Spleen (tissue), 13 donors: ENCODE measurements at regions of chr9 and their contacts with region 1.

Region 1: GRCh38 chr9:33167046-33167808 is at the start of gene B4GALT1:
- DNase-seq: peak; percentile 100
- H3K4me3 ChIP-seq: peak within 1 kb of the TSS; percentile 78 to 90 (median 84)
- H3K27ac ChIP-seq: peak within 1 kb of the TSS; percentile 94 to 99 (median 98)
- H3K4me1 ChIP-seq: peaks cover 40 to 77% (median 60%) of the 10 kb centered on the region in 6 donors
- H3K27me3 ChIP-seq: no peaks in the 10 kb centered on the region
- CTCF ChIP-seq: peak in 6 of 11 experiments; percentile 12 to 43 (median 24)
- POLR2A ChIP-seq: peak; percentile 57 to 86 (median 57)
- total RNA-seq, gene B4GALT1: 75.1 to 111 (median 91.4) TPM

Region 2: GRCh38 chr9:33076358-33077004 is 90.7 kb before region 1 on chr9 and contains the start of gene SMU1:
- intact Hi-C with region 1: loop called (anchors 5 kb)
- DNase-seq: peak; percentile 99
- H3K4me3 ChIP-seq: peak within 1 kb of the TSS; percentile 42 to 76 (median 68)
- H3K27ac ChIP-seq: peak within 1 kb of the TSS; percentile 64 to 97 (median 93)
- H3K4me1 ChIP-seq: peaks cover 19 to 72% (median 51%) of the 10 kb centered on the region in 6 donors
- H3K27me3 ChIP-seq: no peaks in the 10 kb centered on the region
- CTCF ChIP-seq: peak in 2 of 11 experiments; percentile 16 to 39
- POLR2A ChIP-seq: peak in 2 of 3 donors; percentile 50 to 91
- total RNA-seq, gene SMU1: 15.7 to 23.3 (median 19.4) TPM

Region 3: GRCh38 chr9:33111631-33112030 is 55.6 kb before region 1 on chr9:
- intact Hi-C with region 1: no loop called
- DNase-seq: no peak
- H3K4me3 ChIP-seq: no peak overlapping the region
- H3K27ac ChIP-seq: peak overlapping the region in 1 of 8 donors; percentile 22
- H3K4me1 ChIP-seq: peaks cover 0 to 35% (median 16%) of the 10 kb centered on the region in 6 donors
- H3K27me3 ChIP-seq: no peaks in the 10 kb centered on the region
- CTCF ChIP-seq: no peak
- POLR2A ChIP-seq: no peak

Region 4: GRCh38 chr9:33124751-33125381 is 42.4 kb before region 1 on chr9:
- intact Hi-C with region 1: loop called (anchors 5 kb)
- DNase-seq: peak; percentile 74
- H3K4me3 ChIP-seq: no peak overlapping the region
- H3K27ac ChIP-seq: peak overlapping the region; percentile 30 to 85 (median 74)
- H3K4me1 ChIP-seq: peaks cover 25 to 98% (median 52%) of the 10 kb centered on the region in 6 donors
- H3K27me3 ChIP-seq: no peaks in the 10 kb centered on the region
- CTCF ChIP-seq: no peak
- POLR2A ChIP-seq: no peak

Region 5: GRCh38 chr9:33225319-33226149 is 58.3 kb after region 1 on chr9:
- intact Hi-C with region 1: loop called (anchors 10 kb)
- DNase-seq: no peak
- H3K4me3 ChIP-seq: no peak overlapping the region
- H3K27ac ChIP-seq: peak overlapping the region in 6 of 8 donors; percentile 2 to 87 (median 80)
- H3K4me1 ChIP-seq: peaks cover 16 to 49% (median 39%) of the 10 kb centered on the region in 6 donors
- H3K27me3 ChIP-seq: no peaks in the 10 kb centered on the region
- CTCF ChIP-seq: peak; percentile 49 to 89 (median 81)
- POLR2A ChIP-seq: no peak

Region 6: DNA sequence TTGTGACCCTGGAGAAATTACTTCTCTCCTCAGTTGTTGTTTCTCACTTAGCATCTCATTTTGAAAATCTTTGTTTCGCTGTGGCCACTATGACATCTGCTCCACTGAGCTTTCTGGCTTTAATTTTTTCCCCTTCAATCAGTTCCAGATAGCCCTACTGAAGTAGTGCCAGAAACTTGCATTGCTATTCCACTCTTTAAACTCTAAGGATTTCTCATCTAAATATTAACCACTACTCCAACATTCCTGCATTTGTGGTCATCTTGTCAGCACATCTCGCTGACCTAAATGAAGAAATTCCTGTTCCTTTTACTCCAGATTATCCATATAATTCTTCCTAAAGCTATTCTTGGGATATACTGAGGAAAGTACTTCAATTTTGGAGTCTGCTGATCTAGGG is 321.8 kb after region 1 on chr9:
- intact Hi-C with region 1: no loop called
- DNase-seq: no peak
- H3K4me3 ChIP-seq: no peak overlapping the region
- H3K27ac ChIP-seq: no peak overlapping the region
- H3K4me1 ChIP-seq: no peaks in the 10 kb centered on the region
- H3K27me3 ChIP-seq: no peaks in the 10 kb centered on the region
- CTCF ChIP-seq: no peak
- POLR2A ChIP-seq: no peak